ENCODE measurements at regions of chr12 and their contacts with region 1.

Region 1: DNA sequence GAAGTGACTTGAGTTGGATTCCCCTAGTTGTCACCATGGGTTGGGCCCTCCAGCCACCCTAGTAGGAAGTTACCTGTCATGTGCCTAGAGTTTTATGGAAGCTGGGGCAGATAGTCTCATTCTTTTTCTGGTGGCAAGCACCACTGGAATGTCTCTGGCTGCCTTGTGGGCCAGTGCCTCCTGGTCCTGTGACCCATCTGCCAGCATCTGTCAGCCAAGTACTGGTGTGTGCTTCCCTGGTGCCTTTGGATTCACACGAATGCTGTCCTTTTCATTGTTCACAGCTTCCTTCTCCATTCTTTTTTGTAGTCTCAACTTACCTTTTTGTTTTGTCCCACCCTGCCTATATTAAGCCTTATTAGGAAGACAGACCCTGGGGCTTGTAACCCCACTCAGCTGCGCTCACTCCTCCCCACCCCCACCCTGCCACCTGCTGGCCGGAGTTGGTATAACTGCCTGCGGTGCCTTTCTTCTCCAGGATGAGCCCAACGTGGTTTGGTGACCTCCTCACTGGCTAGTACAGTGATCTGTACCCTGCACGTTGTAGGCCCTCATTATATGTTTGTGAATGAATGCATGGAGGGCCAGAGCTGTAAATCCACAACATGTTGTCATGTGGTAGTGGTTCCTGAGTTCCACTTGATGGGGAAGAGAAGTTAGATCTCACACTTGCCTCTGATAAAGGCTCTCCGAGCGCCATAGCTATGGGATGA is 125.7 kb downstream of the TSPAN9 start:
- DNase-seq: peak; percentile 54
- H3K4me3 Mint-ChIP-seq: no peak overlapping the region
- H3K27ac Mint-ChIP-seq: no peak overlapping the region
- H3K4me1 Mint-ChIP-seq: peaks cover 11% of the 10 kb centered on the region
- H3K27me3 Mint-ChIP-seq: no peaks in the 10 kb centered on the region
- CTCF ChIP-seq: peak; percentile 93

Region 2: GRCh38 chr12:3135522-3136461 is 67.1 kb before region 1 on chr12:
- CTCF ChIA-PET with region 1: interaction called, 32 read pairs
- POLR2A ChIA-PET with region 1: no interaction called
- intact Hi-C with region 1: loop called (anchors 1 kb)
- DNase-seq: peak; percentile 79
- H3K4me3 Mint-ChIP-seq: no peak overlapping the region
- H3K27ac Mint-ChIP-seq: no peak overlapping the region
- H3K4me1 Mint-ChIP-seq: peaks cover 5% of the 10 kb centered on the region
- H3K27me3 Mint-ChIP-seq: no peaks in the 10 kb centered on the region
- CTCF ChIP-seq: peak; percentile 87

Region 3: GRCh38 chr12:3168223-3169221 is 34.4 kb before region 1 on chr12:
- CTCF ChIA-PET with region 1: interaction called, 22 read pairs
- POLR2A ChIA-PET with region 1: no interaction called
- intact Hi-C with region 1: no loop called
- DNase-seq: peak; percentile 97
- H3K4me3 Mint-ChIP-seq: peak overlapping the region; percentile 20
- H3K27ac Mint-ChIP-seq: peak overlapping the region; percentile 66
- H3K4me1 Mint-ChIP-seq: peaks cover 46% of the 10 kb centered on the region
- H3K27me3 Mint-ChIP-seq: no peaks in the 10 kb centered on the region
- CTCF ChIP-seq: no peak

Region 4: GRCh38 chr12:3186546-3187215 is 16.2 kb before region 1 on chr12:
- CTCF ChIA-PET with region 1: interaction called, 22 read pairs
- POLR2A ChIA-PET with region 1: no interaction called
- intact Hi-C with region 1: no loop called
- DNase-seq: no peak
- H3K4me3 Mint-ChIP-seq: no peak overlapping the region
- H3K27ac Mint-ChIP-seq: no peak overlapping the region
- H3K4me1 Mint-ChIP-seq: peaks cover 28% of the 10 kb centered on the region
- H3K27me3 Mint-ChIP-seq: no peaks in the 10 kb centered on the region
- CTCF ChIP-seq: no peak

Region 5: GRCh38 chr12:3249081-3249800 is 46.4 kb after region 1 on chr12:
- CTCF ChIA-PET with region 1: no interaction called
- POLR2A ChIA-PET with region 1: no interaction called
- intact Hi-C with region 1: no loop called
- DNase-seq: no peak
- H3K4me3 Mint-ChIP-seq: no peak overlapping the region
- H3K27ac Mint-ChIP-seq: no peak overlapping the region
- H3K4me1 Mint-ChIP-seq: no peaks in the 10 kb centered on the region
- H3K27me3 Mint-ChIP-seq: no peaks in the 10 kb centered on the region
- CTCF ChIP-seq: no peak

Region 6: DNA sequence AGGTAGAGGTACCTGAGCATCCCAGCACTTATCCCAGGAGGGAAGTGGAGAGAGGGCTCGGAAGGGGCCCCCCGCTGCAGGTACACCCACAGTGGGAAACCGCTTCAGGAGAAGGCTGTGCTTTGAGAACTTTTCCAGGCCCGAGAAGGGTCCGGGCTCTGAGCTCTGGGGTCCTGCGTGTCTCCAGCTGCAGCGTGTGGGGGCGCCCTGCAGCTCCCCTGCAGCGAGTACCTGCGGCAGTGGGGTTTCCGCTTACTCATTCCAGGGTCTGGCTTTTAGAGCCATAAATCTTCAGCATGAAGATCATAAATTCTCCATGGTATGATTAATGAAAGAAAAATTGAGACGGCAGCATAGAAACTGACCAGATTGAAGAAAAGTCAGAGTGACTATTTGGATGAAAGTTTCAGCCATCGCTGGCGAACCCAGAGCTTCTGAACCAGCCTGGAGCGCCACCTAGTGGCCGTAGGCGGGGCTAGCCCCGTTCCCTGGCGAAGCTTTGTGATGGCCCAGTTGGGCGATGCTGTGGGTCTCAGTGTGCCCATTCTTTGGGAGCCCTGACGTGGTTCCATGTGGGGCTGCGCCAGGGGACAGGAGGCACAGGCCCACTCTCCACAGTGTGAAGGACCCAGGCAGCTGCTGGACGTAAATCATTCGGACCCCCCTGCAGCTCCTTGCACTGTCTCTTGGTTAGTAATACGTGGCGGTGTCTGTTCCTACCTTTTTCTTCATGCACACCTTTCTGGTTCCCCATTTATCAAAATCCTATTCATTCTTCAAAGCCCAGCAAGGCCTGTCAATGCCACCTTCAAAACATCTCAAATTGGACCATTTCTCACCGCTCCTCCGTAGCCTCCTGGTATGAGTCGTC is 72.5 kb after region 1 on chr12:
- CTCF ChIA-PET with region 1: interaction called, 36 read pairs
- POLR2A ChIA-PET with region 1: no interaction called
- intact Hi-C with region 1: loop called (anchors 1 kb)
- DNase-seq: peak; percentile 68
- H3K4me3 Mint-ChIP-seq: no peak overlapping the region
- H3K27ac Mint-ChIP-seq: no peak overlapping the region
- H3K4me1 Mint-ChIP-seq: peaks cover 17% of the 10 kb centered on the region
- H3K27me3 Mint-ChIP-seq: no peaks in the 10 kb centered on the region
- CTCF ChIP-seq: peak; percentile 95

Measured in MCF 10A (cell line).